Posterior vena cava (tissue), 2 donors: ENCODE measurements at regions of chr17 and their contacts with region 1.

Region 1: DNA sequence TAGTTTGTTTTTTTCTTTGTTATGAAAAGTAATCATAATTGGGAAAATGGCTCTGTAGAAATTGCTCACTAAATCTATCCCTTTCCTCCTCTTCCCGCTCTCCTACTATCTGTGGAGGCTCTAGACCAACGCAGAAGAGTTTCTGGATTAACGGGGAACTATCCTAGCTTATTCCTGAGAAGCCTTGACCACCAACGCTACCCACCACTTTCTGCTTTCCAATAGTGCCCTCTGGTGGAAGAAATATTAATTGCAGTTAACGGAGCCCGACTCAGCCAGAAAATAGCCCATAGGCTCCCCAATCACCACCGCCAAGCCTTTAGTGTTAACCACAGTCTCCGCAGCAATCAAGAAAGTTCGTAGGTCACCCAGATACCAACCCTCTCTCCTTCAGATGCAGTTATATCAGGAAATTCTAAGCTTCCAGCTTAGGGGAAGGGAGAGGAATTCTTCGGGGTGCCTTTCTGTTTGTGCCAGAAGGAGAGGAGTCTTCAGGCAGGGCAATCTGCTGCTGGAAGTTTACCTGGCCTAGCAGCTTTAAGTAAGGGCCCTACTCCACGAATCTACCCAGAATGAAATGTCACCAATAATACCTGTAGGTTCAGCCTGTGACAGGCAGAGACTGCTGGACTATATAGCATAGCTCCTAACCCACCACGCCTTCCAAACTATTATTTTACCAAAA is 23.0 kb upstream of the NSRP1 start:
- DNase-seq: no peak

Region 2: DNA sequence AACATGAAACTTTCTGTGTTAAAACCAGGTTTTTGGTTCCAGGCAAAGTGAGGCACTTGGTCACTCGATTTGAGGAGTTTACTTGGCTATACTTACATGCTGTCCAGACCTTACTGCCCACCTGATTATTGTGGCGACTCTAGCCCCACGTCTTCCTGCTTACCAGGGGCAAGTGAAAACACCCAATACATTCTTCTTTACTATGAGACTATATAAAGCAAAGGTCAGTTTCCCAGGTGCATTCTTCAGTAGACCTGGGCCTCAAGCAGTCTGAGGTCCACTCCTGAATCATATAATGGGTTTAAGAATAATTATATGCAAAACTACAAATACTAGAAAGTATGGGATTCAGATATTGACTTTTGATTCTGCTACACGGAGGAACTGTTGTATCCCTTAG is 65.9 kb before region 1 on chr17:
- intact Hi-C with region 1: loop called in 1 of 2 experiments (anchors 5 kb)
- DNase-seq: no peak